ENCODE measurements at regions of chr22 and their contacts with region 1.

Region 1: DNA sequence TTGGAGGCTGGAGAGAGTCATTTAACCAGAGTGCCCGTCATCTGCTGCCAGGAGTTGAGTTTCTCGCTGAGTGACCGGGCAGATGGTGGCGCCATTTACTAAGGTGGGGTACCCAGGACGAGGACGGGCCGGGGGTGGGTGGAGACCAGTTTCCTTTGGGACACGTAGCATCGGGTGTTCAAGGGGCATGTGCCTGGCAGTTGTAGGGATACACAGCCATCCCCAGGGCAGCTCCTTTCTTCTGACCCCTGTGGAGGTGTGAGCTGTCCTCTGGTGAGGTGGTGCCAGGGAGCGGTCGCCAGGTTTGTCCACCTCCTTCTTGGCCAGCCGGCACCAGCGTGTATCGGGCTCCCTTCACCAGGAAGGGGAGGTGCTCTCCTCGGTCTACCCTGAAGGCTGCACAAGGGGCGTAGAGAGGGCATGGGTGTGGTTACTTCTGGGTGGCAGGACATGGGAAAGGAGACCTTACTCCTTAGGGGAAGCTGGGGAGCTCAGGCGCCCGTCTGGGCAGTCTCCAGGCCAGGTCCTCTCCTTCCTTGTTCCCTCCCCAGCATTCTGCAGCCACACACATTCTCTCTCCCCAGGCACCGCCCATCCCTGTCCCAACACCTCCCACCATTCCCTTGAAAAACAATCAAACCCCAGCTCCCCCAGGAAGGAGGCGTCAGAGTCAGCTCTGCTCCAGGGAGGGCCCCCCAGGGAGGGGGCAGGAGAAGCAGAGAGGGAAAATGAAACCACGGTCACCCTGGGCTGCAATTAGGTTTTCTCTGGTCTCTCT is 10.3 kb upstream of the MB start:
- DNase-seq: peak; percentile 85
- H3K4me3 Mint-ChIP-seq: peak overlapping the region; percentile 67
- H3K27ac Mint-ChIP-seq: no peak overlapping the region
- H3K4me1 Mint-ChIP-seq: peaks cover 16% of the 10 kb centered on the region
- H3K27me3 Mint-ChIP-seq: no peaks in the 10 kb centered on the region

Region 2: GRCh38 chr22:35350539-35351503 is 276.6 kb before region 1 on chr22:
- CTCF ChIA-PET with region 1: interaction called, 5 read pairs
- intact Hi-C with region 1: loop called (anchors 1 kb)
- DNase-seq: peak; percentile 90
- H3K4me3 Mint-ChIP-seq: peak overlapping the region; percentile 59
- H3K27ac Mint-ChIP-seq: no peak overlapping the region
- H3K4me1 Mint-ChIP-seq: peaks cover 25% of the 10 kb centered on the region
- H3K27me3 Mint-ChIP-seq: peaks cover 9% of the 10 kb centered on the region

Region 3: GRCh38 chr22:35660291-35661127 is 33.1 kb after region 1 on chr22:
- CTCF ChIA-PET with region 1: no interaction called
- intact Hi-C with region 1: no loop called
- DNase-seq: peak; percentile 78
- H3K4me3 Mint-ChIP-seq: peak overlapping the region; percentile 32
- H3K27ac Mint-ChIP-seq: peak overlapping the region; percentile 94
- H3K4me1 Mint-ChIP-seq: peaks cover 70% of the 10 kb centered on the region
- H3K27me3 Mint-ChIP-seq: no peaks in the 10 kb centered on the region

Region 4: DNA sequence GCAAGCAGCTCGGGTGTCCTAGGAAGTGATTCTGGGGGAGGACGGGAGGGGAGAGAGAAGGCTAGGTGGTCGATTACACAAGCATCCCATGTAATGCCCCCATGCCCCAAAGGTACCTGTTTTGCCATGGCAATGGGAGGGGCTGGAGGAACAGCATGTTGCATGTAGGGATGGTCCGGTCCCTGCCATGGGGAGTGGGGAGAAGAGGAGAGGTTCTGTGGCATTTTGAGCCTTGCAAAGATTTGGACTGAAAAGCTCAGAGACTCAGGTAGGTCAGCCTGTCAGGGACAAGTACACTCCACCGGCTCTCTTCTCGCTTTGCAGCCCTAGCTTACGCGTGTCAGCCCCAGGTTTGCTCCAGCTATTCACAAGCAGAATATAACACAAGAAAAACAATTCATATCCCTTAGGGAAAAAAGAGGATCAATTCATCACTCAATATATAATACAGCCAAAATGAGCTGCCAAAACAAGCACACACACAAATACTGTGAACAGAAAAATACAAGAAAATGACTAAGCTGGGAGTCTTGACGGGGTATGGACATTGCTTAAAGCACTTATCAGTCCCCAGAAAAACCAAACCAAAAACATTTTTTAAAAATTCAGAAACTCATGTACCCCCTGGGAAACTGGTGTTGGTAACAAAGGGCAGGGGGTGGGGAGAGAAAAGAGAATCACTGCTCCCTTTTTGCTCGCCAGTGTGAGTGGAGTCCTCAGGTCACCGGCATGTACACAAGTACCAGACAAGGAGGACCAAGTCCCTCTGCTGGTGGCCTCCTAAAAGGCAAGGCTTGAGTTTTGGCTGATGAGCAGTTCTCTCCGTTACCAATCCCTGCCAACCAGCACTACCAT is 111.8 kb after region 1 on chr22:
- CTCF ChIA-PET with region 1: interaction called, 4 read pairs
- intact Hi-C with region 1: loop called (anchors 1 kb)
- DNase-seq: no peak
- H3K4me3 Mint-ChIP-seq: no peak overlapping the region
- H3K27ac Mint-ChIP-seq: no peak overlapping the region
- H3K4me1 Mint-ChIP-seq: no peaks in the 10 kb centered on the region
- H3K27me3 Mint-ChIP-seq: no peaks in the 10 kb centered on the region

Region 5: GRCh38 chr22:35838855-35839576 is 211.6 kb after region 1 on chr22:
- CTCF ChIA-PET with region 1: interaction called, 5 read pairs
- intact Hi-C with region 1: loop called (anchors 1 kb)
- DNase-seq: peak; percentile 51
- H3K4me3 Mint-ChIP-seq: no peak overlapping the region
- H3K27ac Mint-ChIP-seq: no peak overlapping the region
- H3K4me1 Mint-ChIP-seq: peaks cover 27% of the 10 kb centered on the region
- H3K27me3 Mint-ChIP-seq: peaks cover 8% of the 10 kb centered on the region

Region 6: GRCh38 chr22:35921777-35922176 is 294.3 kb after region 1 on chr22:
- CTCF ChIA-PET with region 1: interaction called, 16 read pairs
- intact Hi-C with region 1: loop called (anchors 1 kb)
- DNase-seq: peak; percentile 69
- H3K4me3 Mint-ChIP-seq: no peak overlapping the region
- H3K27ac Mint-ChIP-seq: no peak overlapping the region
- H3K4me1 Mint-ChIP-seq: peaks cover 4% of the 10 kb centered on the region
- H3K27me3 Mint-ChIP-seq: no peaks in the 10 kb centered on the region

Region 7: GRCh38 chr22:36123673-36124630 is 496.5 kb after region 1 on chr22:
- CTCF ChIA-PET with region 1: interaction called, 22 read pairs
- intact Hi-C with region 1: loop called (anchors 1 kb)
- DNase-seq: peak; percentile 95
- H3K4me3 Mint-ChIP-seq: peak overlapping the region; percentile 69
- H3K27ac Mint-ChIP-seq: peak overlapping the region; percentile 86
- H3K4me1 Mint-ChIP-seq: peaks cover 14% of the 10 kb centered on the region
- H3K27me3 Mint-ChIP-seq: no peaks in the 10 kb centered on the region

Measured in activated naive CD4-positive, alpha-beta T cell treated with anti-CD3 and anti-CD28 coated beads for 36 hours (primary cell).